Natural killer cell (primary cell): ENCODE measurements at regions of chr1 and their contacts with region 1.

Region 1: GRCh38 chr1:112882271-112882744 is 73.7 kb downstream of the SLC16A1 start:
- DNase-seq: no peak
- ATAC-seq: no peak
- H3K4me3 ChIP-seq: no peak overlapping the region
- H3K4me3 Mint-ChIP-seq: no peak overlapping the region
- H3K27ac ChIP-seq: no peak overlapping the region
- H3K27ac Mint-ChIP-seq: no peak overlapping the region
- H3K4me1 ChIP-seq: peaks cover 5% of the 10 kb centered on the region
- H3K4me1 Mint-ChIP-seq: peaks cover 0 to 10% of the 10 kb centered on the region in 2 donors
- H3K27me3 ChIP-seq: no peaks in the 10 kb centered on the region
- H3K27me3 Mint-ChIP-seq: peaks cover 0 to 12% of the 10 kb centered on the region in 2 donors
- CTCF ChIP-seq: no peak

Region 2: GRCh38 chr1:112866151-112866550 is 16.2 kb before region 1 on chr1:
- intact Hi-C with region 1: no loop called
- DNase-seq: no peak
- ATAC-seq: no peak
- H3K4me3 ChIP-seq: no peak overlapping the region
- H3K4me3 Mint-ChIP-seq: no peak overlapping the region
- H3K27ac ChIP-seq: no peak overlapping the region
- H3K27ac Mint-ChIP-seq: peak overlapping the region in 1 of 2 donors; percentile 37
- H3K4me1 ChIP-seq: no peaks in the 10 kb centered on the region
- H3K4me1 Mint-ChIP-seq: no peaks in the 10 kb centered on the region
- H3K27me3 ChIP-seq: no peaks in the 10 kb centered on the region
- H3K27me3 Mint-ChIP-seq: peaks cover 0 to 7% of the 10 kb centered on the region in 2 donors
- CTCF ChIP-seq: no peak

Region 3: GRCh38 chr1:112938188-112938587 is 55.9 kb after region 1 on chr1:
- intact Hi-C with region 1: no loop called
- DNase-seq: no peak
- ATAC-seq: no peak
- H3K4me3 ChIP-seq: no peak overlapping the region
- H3K4me3 Mint-ChIP-seq: no peak overlapping the region
- H3K27ac ChIP-seq: no peak overlapping the region
- H3K27ac Mint-ChIP-seq: no peak overlapping the region
- H3K4me1 ChIP-seq: no peaks in the 10 kb centered on the region
- H3K4me1 Mint-ChIP-seq: no peaks in the 10 kb centered on the region
- H3K27me3 ChIP-seq: no peaks in the 10 kb centered on the region
- H3K27me3 Mint-ChIP-seq: no peaks in the 10 kb centered on the region
- CTCF ChIP-seq: no peak

Region 4: DNA sequence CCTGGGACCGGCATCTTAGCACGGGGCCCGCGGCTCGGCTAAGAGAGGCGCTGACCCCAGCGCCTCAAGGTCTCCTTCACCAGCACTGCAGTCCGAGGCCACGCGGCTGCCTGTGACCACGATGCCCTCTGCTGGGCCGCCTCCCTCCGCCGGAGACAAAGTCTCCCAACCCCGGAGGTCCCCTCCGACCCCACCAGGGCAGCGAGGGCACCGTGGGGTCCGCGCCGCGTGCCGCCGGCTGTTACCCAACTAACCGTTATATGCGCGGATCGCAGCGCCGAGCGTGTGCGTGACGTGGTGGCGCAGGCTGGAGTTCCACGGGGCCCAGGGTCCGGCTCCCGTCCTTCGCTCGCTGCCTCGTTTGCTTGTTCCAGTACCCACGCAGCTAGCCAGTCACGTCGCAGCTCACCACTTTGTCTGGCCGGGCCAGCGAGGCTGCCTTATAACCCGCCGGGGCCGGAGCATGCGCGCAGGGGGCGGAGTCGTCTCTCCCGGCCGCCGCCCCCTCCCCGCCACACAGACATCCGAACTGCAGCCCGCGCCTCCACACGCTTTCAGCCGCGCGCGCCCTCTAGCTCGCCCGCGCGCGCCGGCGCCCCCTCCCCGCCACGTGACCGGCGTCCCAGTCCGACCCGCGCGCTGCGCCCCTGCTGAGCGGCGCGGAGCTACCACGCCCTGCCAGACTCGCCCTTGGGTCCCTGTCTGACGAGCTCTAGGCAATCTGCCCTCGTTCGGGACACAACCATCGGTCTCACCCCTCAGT is 73.7 kb after region 1 on chr1 and contains the start of gene SLC16A1:
- intact Hi-C with region 1: loop called (anchors 5 kb)
- DNase-seq: peak; percentile 75 to 92
- ATAC-seq: peak; percentile 81 to 92 (median 85)
- H3K4me3 ChIP-seq: peak within 1 kb of the TSS; percentile 97
- H3K4me3 Mint-ChIP-seq: peak within 1 kb of the TSS; percentile 97
- H3K27ac ChIP-seq: peak within 1 kb of the TSS; percentile 87
- H3K27ac Mint-ChIP-seq: peak within 1 kb of the TSS; percentile 3 to 97
- H3K4me1 ChIP-seq: peaks cover 25% of the 10 kb centered on the region
- H3K4me1 Mint-ChIP-seq: peaks cover 31 to 38% of the 10 kb centered on the region in 2 donors
- H3K27me3 ChIP-seq: no peaks in the 10 kb centered on the region
- H3K27me3 Mint-ChIP-seq: peaks cover 4 to 6% of the 10 kb centered on the region in 2 donors
- CTCF ChIP-seq: no peak
- total RNA-seq, gene SLC16A1: 8.7 to 18.5 (median 14.0) TPM

Region 5: GRCh38 chr1:113042285-113043143 is 160.2 kb after region 1 on chr1:
- intact Hi-C with region 1: loop called (anchors 2 kb)
- DNase-seq: peak in 1 of 2 donors; percentile 38
- ATAC-seq: peak; percentile 27 to 61 (median 54)
- H3K4me3 ChIP-seq: no peak overlapping the region
- H3K4me3 Mint-ChIP-seq: no peak overlapping the region
- H3K27ac ChIP-seq: no peak overlapping the region
- H3K27ac Mint-ChIP-seq: peak overlapping the region; percentile 61 to 73
- H3K4me1 ChIP-seq: peaks cover 34% of the 10 kb centered on the region
- H3K4me1 Mint-ChIP-seq: peaks cover 36 to 45% of the 10 kb centered on the region in 2 donors
- H3K27me3 ChIP-seq: no peaks in the 10 kb centered on the region
- H3K27me3 Mint-ChIP-seq: no peaks in the 10 kb centered on the region
- CTCF ChIP-seq: peak; percentile 13

Region 6: DNA sequence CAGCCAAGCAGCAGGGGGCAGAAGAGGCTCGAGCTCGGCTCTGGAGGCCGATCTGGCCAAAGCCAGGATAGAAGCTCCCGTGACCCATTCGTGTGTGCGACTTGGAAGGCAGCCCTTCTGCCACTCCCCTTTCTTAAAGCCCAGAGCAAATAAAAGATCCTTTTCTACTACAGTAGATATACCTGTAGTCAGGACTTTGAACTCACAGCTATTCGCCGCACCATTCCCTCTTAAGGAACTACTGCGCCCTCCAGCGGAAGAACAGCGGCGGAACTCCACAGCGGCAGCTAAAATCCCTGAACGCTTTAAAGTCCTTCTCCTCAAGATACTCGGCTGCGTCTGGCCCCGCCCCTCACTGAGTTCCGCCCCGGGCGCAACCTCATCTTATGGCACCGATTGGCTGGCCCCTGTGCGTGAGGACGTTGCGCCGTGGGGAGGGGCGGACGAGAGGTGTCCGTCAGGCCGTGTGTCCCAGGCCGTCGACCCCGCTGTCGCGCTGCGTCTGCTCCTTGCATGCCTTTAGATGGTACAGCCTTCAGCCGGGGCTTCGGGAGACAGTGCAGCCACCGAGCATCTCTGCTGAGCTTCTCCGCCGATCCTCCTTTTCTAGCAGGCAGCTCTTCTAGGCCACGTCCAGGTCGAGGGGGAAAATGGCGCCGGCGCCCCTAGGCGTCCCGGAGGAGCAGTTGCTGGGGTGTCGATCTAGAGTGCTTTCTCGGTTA is 190.6 kb after region 1 on chr1 and contains the start of gene LRIG2:
- intact Hi-C with region 1: loop called (anchors 2 kb)
- DNase-seq: peak; percentile 95 to 98
- ATAC-seq: peak; percentile 95 to 99 (median 95)
- H3K4me3 ChIP-seq: peak within 1 kb of the TSS; percentile 72
- H3K4me3 Mint-ChIP-seq: peak within 1 kb of the TSS; percentile 97
- H3K27ac ChIP-seq: peak within 1 kb of the TSS; percentile 58
- H3K27ac Mint-ChIP-seq: peak within 1 kb of the TSS; percentile 95 to 99
- H3K4me1 ChIP-seq: peaks cover 10% of the 10 kb centered on the region
- H3K4me1 Mint-ChIP-seq: peaks cover 19 to 36% of the 10 kb centered on the region in 2 donors
- H3K27me3 ChIP-seq: no peaks in the 10 kb centered on the region
- H3K27me3 Mint-ChIP-seq: no peaks in the 10 kb centered on the region
- CTCF ChIP-seq: peak; percentile 88
- total RNA-seq, gene LRIG2: 20.2 to 28.5 (median 23.7) TPM

Region 7: GRCh38 chr1:113677250-113678158 is 795.2 kb after region 1 on chr1:
- intact Hi-C with region 1: loop called (anchors 5 kb)
- DNase-seq: peak in 1 of 2 donors; percentile 60
- ATAC-seq: peak in 2 of 3 donors; percentile 36 to 57
- H3K4me3 ChIP-seq: no peak overlapping the region
- H3K4me3 Mint-ChIP-seq: no peak overlapping the region
- H3K27ac ChIP-seq: no peak overlapping the region
- H3K27ac Mint-ChIP-seq: no peak overlapping the region
- H3K4me1 ChIP-seq: no peaks in the 10 kb centered on the region
- H3K4me1 Mint-ChIP-seq: no peaks in the 10 kb centered on the region
- H3K27me3 ChIP-seq: no peaks in the 10 kb centered on the region
- H3K27me3 Mint-ChIP-seq: peaks cover 4 to 16% of the 10 kb centered on the region in 2 donors
- CTCF ChIP-seq: peak; percentile 58